ENCODE measurements at regions of chr7 and their contacts with region 1.

Region 1: DNA sequence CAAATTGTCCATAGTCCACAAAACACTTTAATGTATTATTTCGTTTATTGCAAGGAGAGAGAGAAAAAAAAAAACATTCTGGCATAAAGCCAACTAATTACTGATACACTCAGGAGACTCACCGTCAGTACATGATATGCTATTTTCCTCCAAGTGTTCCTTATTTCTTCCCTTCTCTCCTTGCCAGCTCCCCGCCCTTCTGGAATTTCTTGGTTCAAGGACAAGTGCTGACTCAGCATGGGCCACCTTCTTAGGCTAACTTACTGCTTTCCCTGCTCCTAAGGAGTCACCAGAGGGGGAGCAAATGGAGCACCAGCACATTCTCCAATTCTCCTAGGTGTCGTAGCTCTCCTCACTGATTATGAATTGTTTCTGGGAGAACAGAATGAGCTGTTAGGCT is 133.8 kb upstream of the HDAC9 start:
- DNase-seq: no peak
- ATAC-seq: peak; percentile 88

Region 2: DNA sequence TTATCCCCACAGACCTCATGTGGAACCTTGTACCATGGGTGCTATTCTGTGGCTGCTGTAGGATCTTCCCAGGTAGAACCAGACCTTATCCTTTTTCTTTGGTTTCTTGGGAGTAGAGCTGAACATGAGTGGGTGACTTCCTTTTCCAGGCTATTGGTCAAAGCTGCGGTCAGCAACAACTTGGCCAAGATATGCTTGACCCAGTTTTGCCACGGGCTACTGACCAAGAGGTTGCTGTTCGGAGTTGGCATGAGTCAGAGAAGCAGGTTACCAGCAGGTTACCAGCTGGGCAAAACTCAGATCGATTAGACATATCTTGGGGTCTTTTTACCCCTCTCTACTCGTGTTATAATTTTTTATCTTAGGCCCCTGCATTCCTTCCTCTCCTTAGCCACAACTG is 97.1 kb after region 1 on chr7:
- intact Hi-C with region 1: no loop called
- DNase-seq: no peak
- ATAC-seq: no peak

Region 3: DNA sequence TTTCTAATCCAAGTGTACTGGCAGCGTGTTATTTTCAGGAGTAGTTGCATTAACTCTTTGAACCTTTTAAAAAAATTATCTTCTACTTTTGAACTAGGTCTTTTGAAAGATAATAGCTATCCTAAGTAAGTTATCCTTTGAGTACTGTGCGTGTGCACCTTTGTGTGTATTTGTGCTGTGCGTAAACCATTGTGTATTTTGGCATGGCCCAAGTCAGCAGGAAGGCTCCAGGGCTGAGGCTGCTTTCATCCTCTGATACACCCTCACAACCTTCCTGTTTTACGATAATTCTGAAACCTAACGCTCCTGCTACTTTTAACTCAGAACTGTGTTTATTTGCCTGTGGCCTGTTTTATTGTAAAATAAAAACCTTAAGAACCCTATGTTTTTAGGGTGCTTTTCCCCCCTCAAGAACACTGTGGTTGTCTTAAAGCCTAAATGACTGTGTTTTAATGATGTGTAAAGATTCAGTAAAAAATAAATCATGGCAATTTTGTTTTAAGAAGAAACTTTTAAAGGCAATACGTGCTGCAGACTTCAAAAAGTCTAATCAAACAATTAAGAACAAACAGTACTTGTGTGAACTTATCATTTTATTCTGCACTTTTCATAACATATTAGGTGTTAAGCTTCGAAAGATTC is 191.3 kb after region 1 on chr7:
- intact Hi-C with region 1: loop called (anchors 10 kb)
- DNase-seq: no peak
- ATAC-seq: peak; percentile 87

Measured in sciatic nerve (tissue), 2 donors.